Activated T-helper 1 cell treated with anti-CD3 and anti-CD28 coated beads, Interleukin-12 subunit alpha, Interleukin-12 subunit beta, Interleukin-2, Interleukin-4 antibody, amounts not matched to agents 30 ng/mL and 10 ng/mL and 1 ng/mL, durations not matched to agents 14 hours and 24 hours and 36 hours (primary cell): ENCODE measurements at regions of chrX and their contacts with region 1.

Region 1: DNA sequence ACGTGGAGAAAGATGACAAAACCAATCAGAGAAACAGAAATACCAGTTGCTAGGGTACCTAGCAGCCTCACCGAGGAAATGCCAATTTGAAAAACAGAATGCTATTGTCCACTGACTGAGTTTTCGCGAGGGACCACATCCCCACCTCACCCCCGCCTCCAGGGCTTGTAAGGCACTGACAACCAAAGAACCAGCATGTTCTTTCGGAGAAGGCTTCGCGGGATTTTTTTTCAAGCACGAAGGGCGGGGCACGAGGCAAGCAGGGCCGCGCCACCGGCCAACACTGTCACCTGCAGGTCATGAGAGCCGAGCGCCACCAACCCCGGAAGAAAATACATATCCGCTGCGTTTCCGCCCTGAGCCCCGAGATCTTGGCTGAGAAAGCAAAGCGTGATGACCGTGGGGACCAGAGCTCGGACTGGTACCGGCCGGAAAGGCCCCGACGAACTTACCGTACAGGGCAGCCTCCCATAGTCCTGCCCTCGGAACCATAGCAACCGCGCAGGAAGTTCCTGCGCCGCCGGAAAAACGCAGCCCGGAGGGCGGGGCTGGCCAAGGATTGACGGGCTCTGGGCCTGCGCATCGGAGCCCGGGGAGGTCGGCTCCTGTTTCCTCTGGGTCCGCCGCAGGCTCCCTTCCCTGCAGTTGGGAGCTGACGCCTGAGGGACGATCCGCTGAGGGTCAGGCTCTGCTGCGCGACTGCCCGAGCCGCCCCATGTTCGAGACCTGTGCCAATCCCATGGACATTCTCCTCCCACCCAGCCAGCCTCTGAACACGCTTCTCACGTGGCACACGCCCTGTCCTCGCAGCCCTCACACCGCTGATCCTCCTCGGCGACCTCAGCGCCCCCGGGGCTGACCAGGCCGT is 59.2 kb upstream of the PAGE5 start:
- DNase-seq: peak; percentile 83
- H3K4me3 Mint-ChIP-seq: peak overlapping the region; percentile 88
- H3K27ac Mint-ChIP-seq: peak overlapping the region; percentile 96
- H3K4me1 Mint-ChIP-seq: peaks cover 9% of the 10 kb centered on the region
- H3K27me3 Mint-ChIP-seq: peaks cover 8% of the 10 kb centered on the region

Region 2: GRCh38 chrX:53441531-53442321 is 1719.2 kb before region 1 on chrX:
- intact Hi-C with region 1: loop called (anchors 2 kb)
- DNase-seq: peak; percentile 74
- H3K4me3 Mint-ChIP-seq: peak overlapping the region; percentile 80
- H3K27ac Mint-ChIP-seq: peak overlapping the region; percentile 72
- H3K4me1 Mint-ChIP-seq: peaks cover 20% of the 10 kb centered on the region
- H3K27me3 Mint-ChIP-seq: peaks cover 2% of the 10 kb centered on the region

Region 3: GRCh38 chrX:54439967-54440871 is 720.7 kb before region 1 on chrX and contains the start of gene TSR2:
- intact Hi-C with region 1: loop called (anchors 1 kb)
- DNase-seq: peak; percentile 75
- H3K4me3 Mint-ChIP-seq: peak within 1 kb of the TSS; percentile 96
- H3K27ac Mint-ChIP-seq: peak within 1 kb of the TSS; percentile 83
- H3K4me1 Mint-ChIP-seq: peaks cover 27% of the 10 kb centered on the region
- H3K27me3 Mint-ChIP-seq: no peaks in the 10 kb centered on the region
- total RNA-seq, gene TSR2: 43.6 and 44.1 TPM in 2 replicates

Region 4: GRCh38 chrX:54808605-54809483 is 352.1 kb before region 1 on chrX:
- intact Hi-C with region 1: loop called (anchors 1 kb)
- DNase-seq: peak; percentile 88
- H3K4me3 Mint-ChIP-seq: peak overlapping the region; percentile 89
- H3K27ac Mint-ChIP-seq: peak overlapping the region; percentile 85
- H3K4me1 Mint-ChIP-seq: peaks cover 17% of the 10 kb centered on the region
- H3K27me3 Mint-ChIP-seq: peaks cover 10% of the 10 kb centered on the region

Region 5: GRCh38 chrX:55057675-55058249 is 103.2 kb before region 1 on chrX:
- intact Hi-C with region 1: loop called (anchors 1 kb)
- DNase-seq: peak; percentile 0
- H3K4me3 Mint-ChIP-seq: peak overlapping the region; percentile 58
- H3K27ac Mint-ChIP-seq: no peak overlapping the region
- H3K4me1 Mint-ChIP-seq: peaks cover 12% of the 10 kb centered on the region
- H3K27me3 Mint-ChIP-seq: peaks cover under 1% of the 10 kb centered on the region

Region 6: DNA sequence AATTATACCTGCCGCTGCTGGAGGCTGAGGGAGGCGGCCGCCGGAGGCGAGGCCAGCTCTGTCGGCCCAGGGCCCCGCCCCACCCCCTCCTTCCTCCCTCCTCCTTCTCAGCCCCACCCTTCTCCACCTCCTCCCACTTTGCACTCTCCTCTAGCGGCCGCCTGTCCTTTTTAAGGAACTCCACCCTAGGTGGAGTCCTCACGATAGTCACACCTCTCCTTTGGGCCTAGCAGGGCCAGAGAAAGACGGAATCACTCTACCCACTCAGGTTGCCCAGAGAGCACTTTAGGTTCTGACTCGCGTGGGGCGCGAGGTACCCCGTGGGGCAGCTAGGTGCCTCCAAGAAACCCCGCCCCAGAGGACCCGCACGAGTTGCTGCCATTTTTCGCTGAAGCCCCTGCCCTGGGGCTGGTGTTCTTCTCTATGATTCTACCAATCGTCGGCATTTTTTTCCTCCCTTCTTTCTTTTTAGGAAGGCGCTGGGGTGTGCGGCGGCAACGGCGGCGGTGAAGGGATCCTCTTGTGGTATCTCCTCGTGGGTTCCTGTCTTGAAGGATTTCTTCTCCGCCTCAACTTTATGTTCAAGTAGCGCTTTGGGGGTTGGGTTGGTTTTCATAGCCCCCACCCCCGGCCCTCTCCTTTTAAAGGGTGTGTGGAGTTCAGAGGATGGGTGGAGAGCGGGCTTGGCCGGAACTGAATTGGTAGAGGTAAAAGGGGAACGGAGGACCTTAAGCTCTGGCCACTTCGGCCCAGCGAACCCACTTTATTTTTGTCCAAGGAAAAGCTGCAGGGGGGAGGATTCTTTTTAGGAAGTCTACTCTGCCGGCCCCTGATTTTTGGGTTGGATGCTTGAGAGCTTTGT is 1071.5 kb after region 1 on chrX and contains the start of gene KLF8:
- intact Hi-C with region 1: loop called (anchors 2 kb)
- DNase-seq: peak; percentile 25
- H3K4me3 Mint-ChIP-seq: peak within 1 kb of the TSS; percentile 87
- H3K27ac Mint-ChIP-seq: peak within 1 kb of the TSS; percentile 78
- H3K4me1 Mint-ChIP-seq: peaks cover 35% of the 10 kb centered on the region
- H3K27me3 Mint-ChIP-seq: peaks cover 4% of the 10 kb centered on the region
- total RNA-seq, gene KLF8: 6.3 and 6.7 TPM in 2 replicates